Aorta (tissue), 5 donors: ENCODE measurements at regions of chr20 and their contacts with region 1.

Region 1: DNA sequence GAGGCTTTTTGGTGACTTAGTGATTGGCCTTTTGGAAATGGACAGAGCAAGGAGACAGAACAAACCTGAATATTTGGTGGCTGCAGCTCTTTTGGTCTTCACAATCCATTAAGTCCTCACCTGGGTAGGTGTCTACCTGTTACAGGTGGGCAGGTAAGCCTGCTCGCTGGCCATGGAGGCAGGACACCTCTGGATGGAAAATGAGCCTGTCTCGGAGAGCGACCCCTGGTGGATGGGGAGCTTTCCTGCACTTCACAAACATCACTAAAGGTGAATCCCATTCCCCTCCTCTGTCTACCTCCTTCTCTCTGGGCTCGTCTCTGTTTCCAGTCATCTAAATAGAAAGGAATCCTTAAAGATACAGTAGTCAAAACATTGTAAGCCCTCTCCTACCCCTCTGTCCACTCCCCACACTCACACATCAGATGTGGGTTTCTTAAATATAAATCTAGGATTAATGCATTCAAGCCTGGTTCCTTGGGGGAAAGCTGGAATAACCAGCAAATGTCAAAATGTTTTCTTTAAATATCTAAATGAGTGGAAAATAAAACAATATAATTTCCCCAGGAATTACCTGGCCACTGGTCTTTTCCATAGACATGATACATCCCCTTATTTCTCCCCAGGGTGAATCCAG is 304.9 kb downstream of the CDH26 start:
- DNase-seq: no peak
- ATAC-seq: no peak
- H3K4me3 ChIP-seq: no peak overlapping the region
- H3K27ac ChIP-seq: no peak overlapping the region
- H3K4me1 ChIP-seq: no peaks in the 10 kb centered on the region
- H3K27me3 ChIP-seq: no peaks in the 10 kb centered on the region

Region 2: GRCh38 chr20:59848182-59848581 is 414.9 kb before region 1 on chr20:
- intact Hi-C with region 1: no loop called
- DNase-seq: no peak
- ATAC-seq: no peak
- H3K4me3 ChIP-seq: no peak overlapping the region
- H3K27ac ChIP-seq: no peak overlapping the region
- H3K4me1 ChIP-seq: no peaks in the 10 kb centered on the region
- H3K27me3 ChIP-seq: no peaks in the 10 kb centered on the region

Region 3: DNA sequence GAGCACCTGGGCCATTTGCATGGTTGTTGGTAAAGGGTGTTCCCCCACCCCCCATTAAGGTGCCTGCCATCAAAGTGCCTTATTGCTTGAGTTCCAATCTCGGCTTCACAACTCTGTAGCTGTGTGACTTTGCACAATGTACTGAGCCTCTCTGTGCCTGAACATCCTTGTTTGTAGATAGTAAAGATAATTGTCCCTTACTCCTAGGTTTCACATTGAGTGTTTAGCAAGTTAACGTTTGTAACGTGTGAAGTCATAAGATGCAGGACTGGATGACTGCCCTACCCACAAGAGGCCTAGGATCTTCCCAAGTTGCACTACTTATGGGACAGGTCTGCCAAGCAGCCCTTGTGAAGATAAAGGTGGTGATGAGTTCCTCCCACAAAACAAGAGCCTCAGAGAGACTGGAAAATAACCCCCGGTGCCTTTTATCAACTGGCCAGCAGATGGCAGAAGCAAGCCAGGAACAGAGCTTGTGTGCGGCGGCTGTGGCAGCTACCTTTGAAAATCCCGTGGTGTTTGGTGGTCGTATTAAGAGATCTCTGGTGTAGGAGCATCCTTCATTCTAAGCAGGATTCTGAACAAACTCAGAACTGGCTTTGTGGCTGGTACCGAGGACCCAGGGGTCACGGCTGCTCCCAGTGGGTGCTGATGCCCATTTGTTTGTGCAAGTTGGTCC is 205.8 kb before region 1 on chr20:
- intact Hi-C with region 1: loop called (anchors 2 to 5 kb)
- DNase-seq: peak; percentile 76 to 78
- ATAC-seq: peak; percentile 52
- H3K4me3 ChIP-seq: no peak overlapping the region
- H3K27ac ChIP-seq: no peak overlapping the region
- H3K4me1 ChIP-seq: no peaks in the 10 kb centered on the region
- H3K27me3 ChIP-seq: no peaks in the 10 kb centered on the region

Region 4: DNA sequence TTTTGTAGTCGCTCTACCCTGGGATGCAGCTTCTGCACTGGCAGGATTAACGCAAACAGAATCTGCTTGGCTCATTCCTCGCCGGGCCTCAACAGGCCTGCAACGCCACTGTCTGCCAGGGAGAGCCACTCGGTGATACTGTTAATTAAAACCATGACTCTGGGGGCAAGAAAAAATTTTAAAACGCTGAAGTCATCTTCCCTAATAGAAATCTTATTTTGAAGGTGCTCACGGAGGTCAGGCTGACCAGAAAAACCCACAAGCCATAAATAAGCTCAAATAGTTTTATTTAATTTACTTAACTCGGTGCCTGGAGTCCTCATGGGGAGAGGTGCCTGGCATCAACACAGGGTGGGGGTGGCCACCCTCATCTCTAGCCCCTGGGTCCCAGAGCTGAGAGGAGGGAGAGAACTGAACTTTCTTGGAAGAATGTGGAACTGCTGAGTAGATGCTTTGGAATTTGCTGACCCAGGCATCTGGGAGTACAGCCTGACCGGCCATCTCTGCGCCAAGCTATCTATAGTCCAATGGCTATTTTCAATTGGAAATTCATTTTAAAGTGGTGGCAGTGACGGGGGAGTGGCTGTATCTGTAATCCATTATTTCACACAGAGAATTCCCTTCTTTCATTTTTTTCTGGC is 200.2 kb before region 1 on chr20:
- intact Hi-C with region 1: loop called in 1 of 2 experiments (anchors 5 kb)
- DNase-seq: peak in 1 of 2 donors; percentile 71
- ATAC-seq: peak; percentile 61
- H3K4me3 ChIP-seq: no peak overlapping the region
- H3K27ac ChIP-seq: peak overlapping the region in 1 of 2 donors; percentile 31
- H3K4me1 ChIP-seq: peaks cover 0 to 3% of the 10 kb centered on the region in 2 donors
- H3K27me3 ChIP-seq: no peaks in the 10 kb centered on the region

Region 5: GRCh38 chr20:60210779-60211617 is 52.1 kb before region 1 on chr20:
- intact Hi-C with region 1: loop called in 1 of 2 experiments (anchors 5 kb)
- DNase-seq: peak; percentile 61 to 79
- ATAC-seq: peak; percentile 53
- H3K4me3 ChIP-seq: no peak overlapping the region
- H3K27ac ChIP-seq: no peak overlapping the region
- H3K4me1 ChIP-seq: no peaks in the 10 kb centered on the region
- H3K27me3 ChIP-seq: no peaks in the 10 kb centered on the region